ENCODE measurements at regions of chr1 and their contacts with region 1.

Region 1: GRCh38 chr1:6794164-6794563 is 8.9 kb downstream of the CAMTA1 start:
- DNase-seq: no peak
- ATAC-seq: peak in 1 of 4 donors; percentile 69
- H3K4me3 ChIP-seq: no peak overlapping the region
- H3K27ac ChIP-seq: no peak overlapping the region
- H3K4me1 ChIP-seq: peaks cover 27% of the 10 kb centered on the region
- H3K27me3 ChIP-seq: no peaks in the 10 kb centered on the region
- CTCF ChIP-seq: peak; percentile 53

Region 2: DNA sequence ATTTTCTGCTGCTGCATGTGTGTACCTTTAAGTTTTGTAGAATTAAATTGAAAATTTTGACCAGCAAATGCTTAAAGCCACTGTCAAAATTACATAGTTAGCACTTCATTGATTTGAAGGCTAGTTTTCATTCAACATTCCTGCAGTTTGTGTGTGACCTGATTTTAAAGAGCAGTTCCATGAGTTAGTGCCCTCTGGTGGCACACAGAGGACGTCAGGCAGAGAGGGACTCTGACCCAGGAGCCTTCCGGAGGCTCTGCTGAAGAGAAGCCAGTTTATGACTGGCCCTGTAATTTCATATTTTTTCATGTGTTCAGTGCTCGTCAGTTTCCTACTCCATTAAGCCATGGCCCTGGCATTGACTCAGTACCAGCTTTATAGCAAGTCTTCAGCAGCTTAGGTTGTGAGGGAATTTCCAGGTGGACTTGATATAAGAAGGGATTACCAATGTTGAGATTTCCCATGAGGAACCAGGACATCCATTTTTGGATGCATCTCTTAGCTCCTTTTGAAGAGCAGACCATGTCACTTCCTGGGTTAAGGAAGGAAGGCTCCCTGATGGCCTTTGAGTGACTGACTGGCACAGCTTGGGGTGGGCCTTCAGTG is 95.8 kb after region 1 on chr1:
- intact Hi-C with region 1: loop called (anchors 2 kb)
- DNase-seq: no peak
- ATAC-seq: peak; percentile 60 to 87 (median 70)
- H3K4me3 ChIP-seq: no peak overlapping the region
- H3K27ac ChIP-seq: no peak overlapping the region
- H3K4me1 ChIP-seq: no peaks in the 10 kb centered on the region
- H3K27me3 ChIP-seq: no peaks in the 10 kb centered on the region
- CTCF ChIP-seq: peak; percentile 80

Region 3: DNA sequence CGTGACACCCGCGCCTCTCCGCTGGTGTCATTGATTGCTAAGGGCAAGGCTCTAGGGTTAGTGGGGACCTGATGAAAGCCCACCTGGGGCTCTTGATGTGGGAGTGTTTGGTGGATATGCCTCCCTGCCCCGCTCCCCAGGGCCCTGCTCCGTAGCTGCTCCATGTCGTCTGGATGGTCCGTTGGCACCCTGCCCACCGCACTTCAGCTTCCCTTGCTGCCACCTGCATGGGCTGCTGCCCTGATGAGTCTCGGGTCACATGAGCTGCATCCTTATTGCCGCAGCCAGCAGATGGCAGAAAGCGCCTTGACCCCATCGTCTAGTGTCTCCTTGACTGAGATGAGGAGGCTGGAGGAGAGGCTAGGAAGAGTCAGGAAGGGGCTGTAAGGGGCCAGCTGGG is 430.5 kb after region 1 on chr1:
- intact Hi-C with region 1: loop called (anchors 5 kb)
- DNase-seq: no peak
- ATAC-seq: peak in 1 of 4 donors; percentile 60
- H3K4me3 ChIP-seq: no peak overlapping the region
- H3K27ac ChIP-seq: no peak overlapping the region
- H3K4me1 ChIP-seq: no peaks in the 10 kb centered on the region
- H3K27me3 ChIP-seq: no peaks in the 10 kb centered on the region
- CTCF ChIP-seq: peak; percentile 36